ENCODE measurements at regions of chr6 and their contacts with region 1.

Region 1: GRCh38 chr6:170516783-170517616 is 36.1 kb downstream of the PSMB1 start:
- DNase-seq: peak in 1 of 2 donors; percentile 52
- ATAC-seq: peak in 1 of 2 donors; percentile 80
- H3K4me3 ChIP-seq: no peak overlapping the region
- H3K27ac ChIP-seq: no peak overlapping the region
- H3K4me1 ChIP-seq: peaks cover 16 to 21% of the 10 kb centered on the region in 2 donors
- H3K27me3 ChIP-seq: no peaks in the 10 kb centered on the region
- CTCF ChIP-seq: peak; percentile 24 to 71 (median 66)
- POLR2A ChIP-seq: no peak

Region 2: DNA sequence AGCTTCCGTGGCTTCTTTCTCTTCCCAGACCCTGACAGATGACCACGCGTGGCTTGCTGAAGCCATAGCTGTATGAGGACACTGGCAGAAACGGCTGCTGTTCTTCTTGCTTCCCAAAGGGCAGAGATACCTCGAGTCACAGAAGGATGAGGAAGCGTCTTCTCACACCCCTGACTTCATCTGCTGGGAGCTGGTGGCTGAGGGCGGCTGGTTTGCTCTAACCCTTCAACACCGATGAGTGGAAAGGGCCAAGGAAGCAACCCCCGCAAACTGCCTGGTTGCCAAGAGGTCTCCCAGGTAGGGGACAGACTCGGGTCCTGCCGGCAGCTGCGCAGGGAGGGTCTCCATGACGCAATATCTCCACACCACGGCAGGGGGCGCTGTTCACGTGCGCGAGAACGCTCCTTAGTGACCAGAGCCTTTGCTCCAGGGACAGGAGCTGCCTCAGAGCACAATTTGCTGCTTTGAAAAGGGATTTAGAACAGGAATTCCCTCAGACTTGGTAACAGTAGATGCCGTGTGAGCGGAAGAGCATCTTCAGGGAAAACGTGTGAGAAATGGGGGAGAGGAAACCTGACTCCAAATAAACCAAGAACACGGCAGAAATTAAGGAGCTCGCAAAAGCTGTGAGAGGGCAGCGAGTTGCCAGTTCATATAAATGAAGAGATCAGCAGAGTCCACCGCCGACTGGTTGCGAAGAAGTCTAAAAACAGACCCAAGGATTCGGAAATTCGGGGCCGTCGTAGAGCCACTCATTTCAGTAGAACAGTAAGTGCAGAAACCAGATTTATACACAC is 685.4 kb before region 1 on chr6:
- in situ Hi-C with region 1: loop called in 3 of 4 experiments (anchors 10 kb)
- intact Hi-C with region 1: loop called (anchors 2 kb)
- DNase-seq: peak; percentile 48 to 49
- ATAC-seq: peak; percentile 84 to 91
- H3K4me3 ChIP-seq: no peak overlapping the region
- H3K27ac ChIP-seq: no peak overlapping the region
- H3K4me1 ChIP-seq: no peaks in the 10 kb centered on the region
- H3K27me3 ChIP-seq: peaks cover 0 to 2% (median 0%) of the 10 kb centered on the region in 3 donors
- CTCF ChIP-seq: peak; percentile 85 to 94 (median 92)
- POLR2A ChIP-seq: no peak

Region 3: DNA sequence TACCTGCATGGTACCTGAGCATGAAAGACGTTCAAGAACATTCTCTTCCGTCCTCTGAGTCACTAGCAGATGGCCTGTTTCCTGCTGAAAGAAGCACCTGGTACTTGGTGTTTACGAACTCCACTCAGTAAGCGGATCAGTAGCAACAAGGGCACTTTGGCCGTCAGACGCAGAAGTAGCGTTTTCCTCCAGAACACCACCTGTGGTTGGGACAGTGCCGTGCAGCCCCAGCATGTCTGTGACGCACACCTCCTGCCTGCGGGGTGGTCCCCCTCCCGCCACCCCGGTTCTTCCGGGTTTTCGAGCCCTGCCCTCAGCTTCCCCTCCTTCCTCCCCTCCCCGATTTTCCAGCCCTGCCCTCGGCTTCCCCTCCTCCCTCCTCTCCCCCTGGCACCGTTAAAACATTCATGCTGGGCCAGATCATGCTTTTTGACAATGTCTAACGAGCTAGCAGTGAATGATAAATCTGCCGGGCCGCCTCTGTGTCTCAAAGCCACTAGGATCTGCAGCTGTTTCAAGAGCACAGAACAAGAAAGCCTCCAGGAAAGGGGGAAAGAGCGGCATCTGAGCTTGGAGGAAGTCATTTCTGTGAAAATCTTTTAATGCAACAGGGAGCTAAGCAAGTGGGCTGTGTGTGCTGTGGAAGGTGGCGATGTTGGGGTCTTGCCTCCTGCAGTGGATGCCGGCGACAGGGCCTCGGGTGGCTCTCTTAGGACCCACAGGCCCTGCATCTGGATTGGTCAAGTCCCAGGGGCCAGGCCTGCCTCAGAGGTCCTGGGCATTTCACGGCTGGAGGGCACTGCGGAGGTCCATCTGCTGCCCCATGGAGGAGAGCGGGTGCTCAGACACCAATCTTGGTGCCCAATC is 557.6 kb before region 1 on chr6:
- in situ Hi-C with region 1: no loop called
- intact Hi-C with region 1: loop called (anchors 10 kb)
- DNase-seq: peak in 1 of 2 donors; percentile 10
- ATAC-seq: no peak
- H3K4me3 ChIP-seq: no peak overlapping the region
- H3K27ac ChIP-seq: no peak overlapping the region
- H3K4me1 ChIP-seq: peaks cover 0 to 3% of the 10 kb centered on the region in 2 donors
- H3K27me3 ChIP-seq: peaks cover 4 to 12% (median 11%) of the 10 kb centered on the region in 3 donors
- CTCF ChIP-seq: peak in 1 of 5 experiments; percentile 13
- POLR2A ChIP-seq: no peak

Region 4: DNA sequence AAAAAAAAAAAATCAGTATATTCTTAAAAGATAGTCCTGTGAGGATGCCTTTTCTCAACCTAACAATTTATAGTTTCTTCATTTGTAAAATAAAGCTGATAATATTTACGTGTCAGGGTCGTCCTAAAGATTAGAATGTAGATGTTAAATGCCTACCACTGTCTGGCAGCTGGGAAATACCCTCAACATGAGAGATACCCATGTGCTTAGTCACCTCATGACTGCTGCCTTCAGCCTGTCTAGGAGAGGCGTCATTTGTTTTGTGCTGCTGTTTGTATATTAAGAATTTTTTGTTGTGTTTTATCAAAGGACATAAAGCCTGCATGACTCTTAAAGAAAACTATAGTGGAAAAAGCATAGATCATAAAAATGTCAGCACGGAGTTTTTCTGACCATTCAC is 200.9 kb before region 1 on chr6:
- in situ Hi-C with region 1: loop called in 2 of 4 experiments (anchors 10 kb)
- intact Hi-C with region 1: no loop called
- DNase-seq: no peak
- ATAC-seq: no peak
- H3K4me3 ChIP-seq: no peak overlapping the region
- H3K27ac ChIP-seq: no peak overlapping the region
- H3K4me1 ChIP-seq: peaks cover 31 to 36% of the 10 kb centered on the region in 2 donors
- H3K27me3 ChIP-seq: no peaks in the 10 kb centered on the region
- CTCF ChIP-seq: no peak
- POLR2A ChIP-seq: no peak

Region 5: GRCh38 chr6:170480050-170480692 is 36.8 kb before region 1 on chr6:
- in situ Hi-C with region 1: no loop called
- intact Hi-C with region 1: no loop called
- DNase-seq: no peak
- ATAC-seq: peak; percentile 58 to 65
- H3K4me3 ChIP-seq: no peak overlapping the region
- H3K27ac ChIP-seq: peak overlapping the region in 1 of 4 donors; percentile 51
- H3K4me1 ChIP-seq: peaks cover 5 to 10% of the 10 kb centered on the region in 2 donors
- H3K27me3 ChIP-seq: no peaks in the 10 kb centered on the region
- CTCF ChIP-seq: peak in 1 of 5 experiments; percentile 20
- POLR2A ChIP-seq: no peak

Measured in gastrocnemius medialis (tissue), 4 donors.